AG04450 (cell line): ENCODE measurements at regions of chr1 and their contacts with region 1.

Region 1: GRCh38 chr1:2174348-2175054 is 20.1 kb downstream of the FAAP20 start:
- DNase-seq: no peak
- H3K4me3 ChIP-seq: peak overlapping the region; percentile 42
- H3K27ac ChIP-seq: no peak overlapping the region
- H3K27me3 ChIP-seq: no peaks in the 10 kb centered on the region
- CTCF ChIP-seq: peak; percentile 94

Region 2: DNA sequence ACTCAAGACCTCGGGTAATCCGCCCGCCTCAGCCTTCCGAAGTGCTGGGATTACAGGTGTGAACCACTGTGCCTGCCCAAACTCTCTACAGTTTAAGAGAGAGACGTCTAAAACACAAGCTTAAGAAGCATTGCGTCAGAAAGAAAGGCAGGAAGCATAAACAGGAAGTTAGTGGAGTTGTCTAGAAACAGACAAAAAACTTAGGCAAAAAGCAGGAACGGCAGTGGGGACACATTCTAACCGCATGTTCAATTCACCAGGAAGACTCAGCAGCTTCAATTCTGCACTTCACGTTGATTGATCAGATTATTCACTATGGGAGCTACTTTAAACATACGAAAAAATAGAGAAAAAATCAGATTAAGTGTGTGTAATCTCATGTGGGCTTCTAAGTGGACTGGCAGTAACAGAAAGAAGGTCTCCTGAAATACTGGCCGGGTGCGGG is 178.3 kb before region 1 on chr1:
- CTCF ChIA-PET with region 1: no interaction called
- POLR2A ChIA-PET with region 1: no interaction called
- DNase-seq: no peak
- H3K4me3 ChIP-seq: no peak overlapping the region
- H3K27ac ChIP-seq: no peak overlapping the region
- H3K27me3 ChIP-seq: peaks cover 4% of the 10 kb centered on the region
- CTCF ChIP-seq: no peak

Region 3: DNA sequence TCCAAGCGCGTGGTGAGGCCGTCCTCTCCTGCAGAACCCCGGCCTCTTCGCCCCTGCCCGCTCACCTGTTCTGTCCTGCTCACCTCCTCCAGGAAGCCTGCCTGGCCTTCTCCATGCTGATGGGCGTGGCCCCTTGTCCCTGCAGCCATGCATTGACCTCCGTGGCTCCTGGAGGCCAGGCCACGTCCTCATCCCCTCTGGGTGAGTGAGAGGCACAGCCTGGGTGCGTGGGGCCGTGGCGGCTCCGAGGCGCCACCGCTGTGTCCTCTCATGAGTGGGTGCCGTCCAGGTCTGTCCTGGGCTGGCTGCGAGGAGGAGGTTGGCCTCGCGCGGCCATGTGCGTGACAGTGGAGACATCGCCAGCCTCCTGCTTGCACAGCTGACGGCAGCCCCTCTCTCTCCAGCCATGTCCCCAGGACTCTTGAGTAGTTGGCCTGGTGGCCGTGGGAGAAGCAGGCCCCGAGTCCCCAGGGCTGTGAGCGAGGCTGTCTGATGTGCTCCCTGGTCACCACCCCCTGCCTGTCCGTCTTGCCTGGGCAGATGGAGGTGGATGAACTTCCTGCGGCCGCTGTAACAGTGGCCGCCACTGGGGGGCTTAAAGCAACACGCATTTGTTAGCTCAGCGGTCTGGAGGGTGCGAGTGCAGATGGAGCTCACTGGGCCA is 66.2 kb before region 1 on chr1:
- CTCF ChIA-PET with region 1: interaction called, 18 read pairs
- POLR2A ChIA-PET with region 1: no interaction called
- DNase-seq: peak; percentile 16
- H3K4me3 ChIP-seq: no peak overlapping the region
- H3K27ac ChIP-seq: no peak overlapping the region
- H3K27me3 ChIP-seq: peaks cover 13% of the 10 kb centered on the region
- CTCF ChIP-seq: peak; percentile 59

Region 4: GRCh38 chr1:2141036-2141435 is 33.5 kb before region 1 on chr1:
- CTCF ChIA-PET with region 1: interaction called, 26 read pairs
- POLR2A ChIA-PET with region 1: no interaction called
- DNase-seq: no peak
- H3K4me3 ChIP-seq: no peak overlapping the region
- H3K27ac ChIP-seq: no peak overlapping the region
- H3K27me3 ChIP-seq: peaks cover 6% of the 10 kb centered on the region
- CTCF ChIP-seq: no peak

Region 5: DNA sequence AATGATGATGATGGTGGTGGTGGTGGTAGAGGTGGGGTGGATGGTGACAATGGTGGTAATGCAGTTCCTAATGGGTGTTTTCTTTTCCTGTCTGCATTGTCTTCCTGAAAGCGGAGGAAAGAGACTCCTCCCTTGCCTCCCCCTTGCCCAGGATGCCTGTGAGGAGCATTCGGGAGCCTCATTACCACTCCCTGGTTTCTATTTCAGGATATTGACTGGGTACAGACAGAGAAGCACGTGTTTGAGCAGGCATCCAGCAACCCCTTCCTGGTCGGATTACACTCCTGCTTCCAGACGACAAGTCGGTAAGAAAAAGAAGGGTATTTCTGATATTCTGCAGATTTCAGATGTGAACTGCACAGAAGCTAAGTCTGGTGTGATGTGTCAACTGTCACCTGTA is 18.7 kb before region 1 on chr1:
- CTCF ChIA-PET with region 1: interaction called, 14 read pairs
- POLR2A ChIA-PET with region 1: no interaction called
- DNase-seq: no peak
- H3K4me3 ChIP-seq: no peak overlapping the region
- H3K27ac ChIP-seq: no peak overlapping the region
- H3K27me3 ChIP-seq: peaks cover 2% of the 10 kb centered on the region
- CTCF ChIP-seq: no peak

Region 6: DNA sequence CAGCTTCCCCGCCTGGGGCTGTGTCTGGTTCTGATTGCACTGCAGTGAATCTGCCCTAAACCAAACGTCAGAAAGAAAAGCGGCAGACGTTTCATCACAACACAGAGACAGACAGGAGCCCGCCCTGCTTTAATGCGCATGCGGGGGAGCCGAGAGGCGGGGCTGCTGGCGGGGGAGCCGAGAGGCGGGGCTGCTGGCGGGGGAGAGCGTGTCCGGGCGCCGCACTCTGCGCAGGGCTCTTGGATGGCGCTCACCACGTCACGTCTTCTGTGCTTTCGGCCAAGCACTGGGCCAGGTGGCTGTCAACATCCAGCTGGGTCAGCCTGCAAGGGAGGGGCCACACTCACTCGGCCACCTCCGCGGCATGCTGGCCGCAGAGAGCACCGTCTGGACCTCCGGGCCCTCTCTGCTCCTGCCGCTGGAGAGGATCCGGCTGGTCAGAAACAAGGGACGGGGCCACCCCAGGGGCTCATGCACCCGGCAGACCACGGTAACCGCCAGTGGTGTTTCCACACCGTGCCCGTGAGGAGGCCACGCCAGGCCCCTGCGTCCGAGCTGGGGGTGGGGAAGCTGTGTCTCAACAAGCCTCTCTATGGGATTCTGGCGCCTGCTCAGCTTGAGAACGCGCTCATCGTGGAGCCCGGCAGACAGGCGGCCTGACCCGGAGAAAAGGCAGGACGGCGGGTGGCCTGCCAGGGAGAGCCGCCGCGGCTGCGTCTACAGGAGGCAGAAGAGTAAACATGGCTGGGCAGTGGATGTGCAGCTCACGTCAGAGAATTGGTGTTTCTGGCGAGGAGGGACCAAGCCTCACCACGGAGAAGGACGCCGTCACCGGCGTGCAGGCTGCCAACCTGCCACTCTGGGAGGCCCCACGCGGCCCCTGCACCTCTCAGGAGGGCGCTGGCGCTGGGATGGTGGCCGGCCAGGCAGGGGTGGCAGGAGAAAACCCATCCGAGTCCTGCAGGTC is 15.2 kb after region 1 on chr1:
- CTCF ChIA-PET with region 1: interaction called, 14 read pairs
- POLR2A ChIA-PET with region 1: no interaction called
- DNase-seq: peak; percentile 90
- H3K4me3 ChIP-seq: peak overlapping the region; percentile 64
- H3K27ac ChIP-seq: peak overlapping the region; percentile 94
- H3K27me3 ChIP-seq: no peaks in the 10 kb centered on the region
- CTCF ChIP-seq: no peak